ENCODE measurements at regions of chr20 and their contacts with region 1.

Region 1: DNA sequence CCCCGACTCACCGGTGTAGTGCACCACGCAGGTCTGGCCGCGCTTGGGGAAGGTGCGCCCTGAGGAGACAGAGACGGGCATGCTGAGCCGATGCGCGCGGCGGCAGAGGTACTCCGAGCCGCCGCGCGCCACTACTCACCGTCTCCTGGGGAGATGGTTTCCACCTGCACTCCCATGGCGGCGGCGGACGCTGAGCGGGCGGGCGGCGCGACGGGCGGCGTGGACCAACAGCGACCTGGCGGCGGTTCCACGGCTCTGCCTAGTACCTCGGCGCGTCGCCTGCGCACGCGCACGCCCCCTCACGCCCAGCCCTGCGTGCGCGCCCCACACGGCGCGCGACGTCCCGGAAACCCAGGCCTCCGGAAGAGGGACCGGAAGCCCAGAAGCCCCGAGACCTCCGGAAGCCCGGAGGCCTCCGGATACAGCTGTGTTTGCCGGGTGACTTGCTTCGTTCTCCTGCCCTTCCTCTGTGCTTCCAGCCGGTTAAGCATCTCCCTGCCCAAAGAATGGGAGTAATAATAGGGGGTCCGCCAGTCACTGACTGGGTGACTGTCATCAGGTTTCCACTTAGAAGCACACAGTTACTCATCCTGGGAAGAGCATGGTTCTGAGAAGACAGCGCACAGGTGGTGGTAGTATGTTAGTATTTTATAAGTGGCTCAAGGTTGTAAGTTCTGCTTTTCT is at the start of gene FKBP1A:
- DNase-seq: peak; percentile 97
- total RNA-seq, gene FKBP1A: 239 to 274 TPM

Region 2: DNA sequence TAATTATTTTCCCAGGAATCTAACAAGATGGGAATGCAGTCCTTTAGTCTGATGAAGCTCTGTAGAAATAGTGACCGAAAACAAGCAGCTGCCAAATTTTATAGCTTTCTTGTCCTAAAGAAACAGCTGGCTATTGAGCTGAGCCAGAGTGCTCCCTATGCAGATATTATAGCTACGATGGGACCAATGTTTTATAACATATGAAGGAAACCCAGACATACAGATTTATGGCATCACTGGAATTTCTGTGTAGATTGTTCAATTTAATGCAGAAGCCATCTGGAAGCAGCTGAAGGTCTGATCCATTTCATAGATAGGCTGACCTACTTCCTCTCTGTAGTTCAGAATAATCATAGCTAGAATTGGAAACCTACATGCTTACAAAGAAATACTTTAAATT is 138.7 kb before region 1 on chr20:
- intact Hi-C with region 1: no loop called
- DNase-seq: no peak

Region 3: DNA sequence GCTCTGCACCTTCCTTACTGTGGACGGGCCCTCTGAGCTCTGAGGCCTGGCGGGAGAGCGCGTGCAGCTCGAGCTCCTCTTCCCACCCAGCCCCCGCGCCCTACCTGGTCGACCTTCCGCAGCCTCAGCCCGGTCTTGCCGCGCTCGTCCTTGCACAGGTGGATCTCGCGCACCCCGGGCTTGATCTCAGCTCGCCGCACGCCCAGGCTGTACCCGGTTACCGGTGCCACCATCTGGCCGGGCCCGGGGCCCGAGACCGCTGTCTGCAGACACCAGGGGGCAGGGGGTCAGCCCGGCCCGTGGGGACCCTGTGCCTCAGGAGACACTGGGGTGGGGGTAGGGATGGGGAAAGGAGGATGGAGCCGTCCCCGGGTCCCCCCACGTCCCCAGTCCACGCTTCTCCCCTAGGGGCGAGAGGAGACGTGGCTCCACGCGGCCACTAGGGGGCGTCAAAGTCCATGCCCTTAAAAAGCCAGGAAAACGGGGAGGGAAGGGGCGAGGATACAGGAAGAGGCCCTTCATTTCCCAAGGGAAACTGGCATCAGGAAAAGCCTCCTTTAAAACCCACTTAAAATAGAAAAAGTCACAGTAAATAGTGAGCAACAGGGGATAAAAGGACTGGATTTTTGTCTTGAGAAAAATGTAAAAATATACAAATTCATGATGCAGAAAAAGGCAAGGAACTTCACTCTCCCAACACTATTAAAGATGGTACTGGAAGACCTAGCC is 79.6 kb before region 1 on chr20:
- intact Hi-C with region 1: loop called in 1 of 2 experiments (anchors 10 kb)
- DNase-seq: peak; percentile 87

Region 4: GRCh38 chr20:1325173-1326030 is 67.6 kb before region 1 on chr20:
- intact Hi-C with region 1: loop called in 1 of 2 experiments (anchors 5 kb)
- DNase-seq: peak; percentile 100

Region 5: GRCh38 chr20:1466211-1467081 is 73.5 kb after region 1 on chr20 and contains the start of gene NSFL1C:
- intact Hi-C with region 1: loop called in 1 of 2 experiments (anchors 2 kb)
- DNase-seq: peak; percentile 99
- total RNA-seq, gene NSFL1C: 58.7 to 62.0 TPM